Ovary (tissue), 10 donors: ENCODE measurements at regions of chr9 and their contacts with region 1.

Region 1: GRCh38 chr9:122350638-122351355 is 20.0 kb upstream of the PTGS1 start:
- DNase-seq: peak; percentile 69 to 87 (median 82)
- H3K4me3 ChIP-seq: no peak overlapping the region
- H3K27ac ChIP-seq: no peak overlapping the region
- H3K4me1 ChIP-seq: peaks cover 2% of the 10 kb centered on the region
- H3K27me3 ChIP-seq: no peaks in the 10 kb centered on the region
- CTCF ChIP-seq: peak; percentile 67 to 90 (median 84)
- EP300 ChIP-seq: no peak
- POLR2A ChIP-seq: no peak

Region 2: GRCh38 chr9:121895818-121896544 is 454.8 kb before region 1 on chr9:
- intact Hi-C with region 1: no loop called
- DNase-seq: peak; percentile 76 to 80 (median 78)
- H3K4me3 ChIP-seq: no peak overlapping the region
- H3K27ac ChIP-seq: peak overlapping the region in 1 of 2 donors; percentile 56
- H3K4me1 ChIP-seq: peaks cover 3% of the 10 kb centered on the region
- H3K27me3 ChIP-seq: no peaks in the 10 kb centered on the region
- CTCF ChIP-seq: peak in 1 of 3 donors; percentile 16
- EP300 ChIP-seq: no peak
- POLR2A ChIP-seq: no peak

Region 3: DNA sequence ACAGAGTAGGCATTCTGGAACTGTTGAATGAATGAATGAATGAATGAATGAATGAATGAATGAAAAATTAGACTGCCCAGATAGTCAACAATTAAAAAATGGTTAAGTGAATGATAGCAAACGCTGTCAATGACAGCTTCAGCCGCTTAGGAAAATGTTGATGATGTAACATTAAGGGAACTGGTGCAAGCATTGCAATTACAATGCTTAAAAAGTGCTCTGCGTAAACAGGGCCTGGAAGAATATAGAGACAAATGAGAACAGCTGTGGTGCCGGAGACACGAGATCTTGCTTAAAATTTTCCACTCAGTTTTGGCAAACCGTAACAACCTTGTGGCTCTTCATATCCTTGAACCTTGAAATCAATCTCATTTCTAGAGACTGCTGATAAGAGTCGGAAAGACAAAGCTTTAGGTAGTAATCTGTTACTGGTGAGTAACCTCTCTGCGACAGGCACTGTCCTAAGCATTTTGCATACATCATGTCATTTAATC is 252.9 kb before region 1 on chr9:
- intact Hi-C with region 1: loop called in 1 of 4 experiments (anchors 2 kb)
- DNase-seq: no peak
- H3K4me3 ChIP-seq: no peak overlapping the region
- H3K27ac ChIP-seq: no peak overlapping the region
- H3K4me1 ChIP-seq: peaks cover 2% of the 10 kb centered on the region
- H3K27me3 ChIP-seq: no peaks in the 10 kb centered on the region
- CTCF ChIP-seq: no peak
- EP300 ChIP-seq: no peak
- POLR2A ChIP-seq: no peak

Region 4: GRCh38 chr9:122125158-122125508 is 225.7 kb before region 1 on chr9:
- intact Hi-C with region 1: loop called (anchors 2 to 5 kb)
- DNase-seq: peak; percentile 67 to 88 (median 80)
- H3K4me3 ChIP-seq: no peak overlapping the region
- H3K27ac ChIP-seq: no peak overlapping the region
- H3K4me1 ChIP-seq: no peaks in the 10 kb centered on the region
- H3K27me3 ChIP-seq: no peaks in the 10 kb centered on the region
- CTCF ChIP-seq: peak; percentile 73 to 84 (median 82)
- EP300 ChIP-seq: no peak
- POLR2A ChIP-seq: no peak

Region 5: DNA sequence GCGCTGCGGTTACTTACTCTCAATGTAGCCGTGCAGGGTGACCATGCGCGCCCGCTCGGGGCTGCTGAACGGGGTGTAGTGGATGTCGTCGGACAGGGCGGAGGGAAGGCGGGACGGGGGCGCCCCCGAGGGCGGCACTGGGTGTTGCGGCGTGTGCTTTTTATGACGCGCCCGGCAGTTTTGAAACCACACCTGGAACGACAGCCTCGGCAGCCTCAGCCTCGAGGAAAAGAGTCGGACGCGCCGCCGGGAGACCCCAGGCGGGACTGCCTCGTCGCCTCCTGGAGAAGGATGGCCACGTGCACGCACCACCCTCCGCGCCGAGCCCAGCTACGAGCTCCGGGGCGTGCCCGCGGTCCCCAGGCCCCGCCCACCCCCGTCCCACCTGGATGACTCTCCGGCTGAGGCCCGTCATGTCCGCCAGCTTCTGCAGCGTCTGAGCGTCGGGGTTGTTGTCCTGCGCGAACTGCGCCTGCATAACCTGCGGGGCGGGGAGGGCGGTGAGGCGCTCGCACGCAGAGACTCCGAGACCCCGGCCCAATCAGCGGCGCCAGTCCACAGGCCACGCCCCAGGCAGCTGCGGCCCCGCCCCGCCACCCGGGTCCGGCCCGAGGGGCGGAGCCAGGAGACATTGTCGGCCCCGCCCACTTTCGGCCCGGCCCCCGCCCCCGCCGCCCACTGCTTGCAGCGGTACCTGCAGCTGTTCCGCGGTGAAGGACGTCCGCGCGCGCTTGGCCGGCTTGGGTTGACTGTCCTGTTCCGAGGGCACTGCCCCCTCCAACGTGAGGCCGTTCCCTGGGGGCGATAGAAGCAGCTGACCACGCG is 137.0 kb before region 1 on chr9:
- intact Hi-C with region 1: loop called in 1 of 4 experiments (anchors 10 kb)
- DNase-seq: peak; percentile 23 to 57 (median 32)
- H3K4me3 ChIP-seq: peak overlapping the region; percentile 4
- H3K27ac ChIP-seq: no peak overlapping the region
- H3K4me1 ChIP-seq: peaks cover 7% of the 10 kb centered on the region
- H3K27me3 ChIP-seq: no peaks in the 10 kb centered on the region
- CTCF ChIP-seq: no peak
- EP300 ChIP-seq: no peak
- POLR2A ChIP-seq: no peak